SK-N-SH (cell line): ENCODE measurements at regions of chr3 and their contacts with region 1.

Region 1: GRCh38 chr3:47176582-47176981 is 12.7 kb upstream of the SETD2 start:
- DNase-seq: no peak
- H3K4me3 ChIP-seq: no peak overlapping the region
- H3K27ac ChIP-seq: no peak overlapping the region
- H3K4me1 ChIP-seq: no peaks in the 10 kb centered on the region
- H3K27me3 ChIP-seq: no peaks in the 10 kb centered on the region
- CTCF ChIP-seq: no peak
- EP300 ChIP-seq: no peak
- RAD21 ChIP-seq: no peak

Region 2: GRCh38 chr3:47096959-47097358 is 79.6 kb before region 1 on chr3:
- CTCF ChIA-PET with region 1: no interaction called
- POLR2A ChIA-PET with region 1: interaction called, 11 read pairs
- DNase-seq: no peak
- H3K4me3 ChIP-seq: no peak overlapping the region
- H3K27ac ChIP-seq: peak overlapping the region; percentile 40 to 81; a peak in 3 of 4 replicates
- H3K4me1 ChIP-seq: peaks cover 2 to 15% of the 10 kb centered on the region in 2 experiments
- H3K27me3 ChIP-seq: no peaks in the 10 kb centered on the region
- CTCF ChIP-seq: no peak
- EP300 ChIP-seq: peak in 1 of 2 experiments; percentile 66; a peak in 1 of 4 replicates
- RAD21 ChIP-seq: no peak